Left lung (tissue), 14 donors: ENCODE measurements at regions of chr2 and their contacts with region 1.

Region 1: DNA sequence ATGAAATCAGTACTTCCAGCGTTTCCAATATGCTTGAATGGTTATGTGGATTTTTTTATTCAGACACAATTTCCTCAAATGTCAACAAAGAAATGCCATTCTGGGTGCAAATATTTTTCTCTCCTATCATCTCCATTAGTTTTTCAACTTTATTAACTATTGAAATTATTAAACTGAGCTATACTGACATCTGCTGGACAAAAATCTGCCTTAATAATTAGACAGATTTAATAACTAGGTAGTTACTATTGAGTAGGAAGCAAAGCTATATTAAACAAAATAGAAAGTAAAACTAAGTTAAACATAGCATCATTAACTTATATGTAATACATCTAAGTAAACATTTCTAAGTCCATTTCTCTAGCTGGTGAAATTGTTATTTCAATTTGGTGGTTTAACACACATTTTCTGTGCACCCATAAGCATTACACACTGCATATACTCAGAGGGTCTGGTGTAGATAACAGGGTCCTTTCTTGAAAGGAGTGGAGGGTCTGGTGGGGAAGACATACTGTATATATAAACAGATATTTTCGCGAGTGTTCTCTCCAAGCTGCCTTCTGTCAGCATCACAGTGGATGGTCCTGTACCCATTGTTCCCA is 77.0 kb downstream of the LANCL1 start:
- DNase-seq: peak in 1 of 4 donors; percentile 18
- ATAC-seq: peak; percentile 72
- H3K4me3 ChIP-seq: no peak overlapping the region
- H3K27ac ChIP-seq: no peak overlapping the region
- H3K4me1 ChIP-seq: no peaks in the 10 kb centered on the region
- H3K27me3 ChIP-seq: no peaks in the 10 kb centered on the region
- CTCF ChIP-seq: peak in 1 of 2 donors; percentile 48

Region 2: GRCh38 chr2:210252699-210253606 is 146.6 kb before region 1 on chr2:
- intact Hi-C with region 1: loop called in 1 of 2 experiments (anchors 10 kb)
- DNase-seq: peak in 3 of 4 donors; percentile 41 to 45 (median 41)
- ATAC-seq: peak; percentile 80
- H3K4me3 ChIP-seq: peak overlapping the region in 1 of 2 donors; percentile 0
- H3K27ac ChIP-seq: peak overlapping the region; percentile 1 to 40
- H3K4me1 ChIP-seq: peaks cover 0 to 6% of the 10 kb centered on the region in 2 donors
- H3K27me3 ChIP-seq: no peaks in the 10 kb centered on the region
- CTCF ChIP-seq: no peak

Region 3: DNA sequence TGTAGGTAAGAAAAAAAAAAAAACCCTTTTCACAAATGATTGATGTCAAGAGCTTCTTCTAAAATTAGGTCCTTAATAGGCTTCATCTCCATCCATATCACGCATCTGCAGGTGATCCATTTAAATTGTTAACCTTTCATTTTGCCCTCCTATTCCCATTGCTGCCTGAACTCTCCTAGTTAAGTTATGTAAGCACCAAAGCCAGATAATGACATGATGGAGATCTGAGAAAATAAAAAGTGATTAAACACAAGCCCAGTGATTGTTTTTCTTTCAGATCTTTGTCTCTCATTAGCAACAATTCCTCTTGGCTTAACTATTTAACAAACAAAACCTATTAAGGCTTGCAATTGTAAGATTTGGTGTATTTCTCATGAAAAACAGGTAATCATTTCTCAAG is 57.0 kb after region 1 on chr2:
- intact Hi-C with region 1: no loop called
- DNase-seq: no peak
- ATAC-seq: no peak
- H3K4me3 ChIP-seq: no peak overlapping the region
- H3K27ac ChIP-seq: no peak overlapping the region
- H3K4me1 ChIP-seq: no peaks in the 10 kb centered on the region
- H3K27me3 ChIP-seq: no peaks in the 10 kb centered on the region
- CTCF ChIP-seq: no peak